Caco-2 (cell line): ENCODE measurements at regions of chr11 and their contacts with region 1.

Region 1: GRCh38 chr11:27991731-27992130 is 116.2 kb downstream of the KIF18A start:
- DNase-seq: no peak
- H3K4me3 ChIP-seq: no peak overlapping the region
- H3K4me3 Mint-ChIP-seq: no peak overlapping the region
- H3K27ac Mint-ChIP-seq: no peak overlapping the region
- H3K4me1 ChIP-seq: no peaks in the 10 kb centered on the region
- H3K4me1 Mint-ChIP-seq: peaks cover 7% of the 10 kb centered on the region
- H3K27me3 ChIP-seq: no peaks in the 10 kb centered on the region
- H3K27me3 Mint-ChIP-seq: no peaks in the 10 kb centered on the region
- CTCF ChIP-seq: no peak

Region 2: GRCh38 chr11:27945348-27945747 is 46.4 kb before region 1 on chr11:
- CTCF ChIA-PET with region 1: no interaction called
- POLR2A ChIA-PET with region 1: no interaction called
- intact Hi-C with region 1: no loop called
- DNase-seq: no peak
- H3K4me3 ChIP-seq: no peak overlapping the region
- H3K4me3 Mint-ChIP-seq: no peak overlapping the region
- H3K27ac Mint-ChIP-seq: no peak overlapping the region
- H3K4me1 ChIP-seq: no peaks in the 10 kb centered on the region
- H3K4me1 Mint-ChIP-seq: no peaks in the 10 kb centered on the region
- H3K27me3 ChIP-seq: no peaks in the 10 kb centered on the region
- H3K27me3 Mint-ChIP-seq: no peaks in the 10 kb centered on the region
- CTCF ChIP-seq: no peak

Region 3: GRCh38 chr11:27972522-27973170 is 19.1 kb before region 1 on chr11:
- CTCF ChIA-PET with region 1: no interaction called
- POLR2A ChIA-PET with region 1: no interaction called
- intact Hi-C with region 1: no loop called
- DNase-seq: no peak
- H3K4me3 ChIP-seq: no peak overlapping the region
- H3K4me3 Mint-ChIP-seq: no peak overlapping the region
- H3K27ac Mint-ChIP-seq: no peak overlapping the region
- H3K4me1 ChIP-seq: no peaks in the 10 kb centered on the region
- H3K4me1 Mint-ChIP-seq: no peaks in the 10 kb centered on the region
- H3K27me3 ChIP-seq: no peaks in the 10 kb centered on the region
- H3K27me3 Mint-ChIP-seq: no peaks in the 10 kb centered on the region
- CTCF ChIP-seq: no peak

Region 4: GRCh38 chr11:28009388-28009787 is 17.7 kb after region 1 on chr11:
- CTCF ChIA-PET with region 1: no interaction called
- POLR2A ChIA-PET with region 1: no interaction called
- intact Hi-C with region 1: loop called (anchors 1 kb)
- DNase-seq: no peak
- H3K4me3 ChIP-seq: no peak overlapping the region
- H3K4me3 Mint-ChIP-seq: no peak overlapping the region
- H3K27ac Mint-ChIP-seq: no peak overlapping the region
- H3K4me1 ChIP-seq: no peaks in the 10 kb centered on the region
- H3K4me1 Mint-ChIP-seq: no peaks in the 10 kb centered on the region
- H3K27me3 ChIP-seq: no peaks in the 10 kb centered on the region
- H3K27me3 Mint-ChIP-seq: no peaks in the 10 kb centered on the region
- CTCF ChIP-seq: no peak